HCT116 (cell line): ENCODE measurements at regions of chr14 and their contacts with region 1.

Region 1: GRCh38 chr14:101665515-101666078 is 95.9 kb upstream of the PPP2R5C start:
- DNase-seq: peak; percentile 57
- ATAC-seq: peak; percentile 98
- H3K4me3 ChIP-seq: no peak overlapping the region
- H3K27ac ChIP-seq: no peak overlapping the region
- H3K4me1 ChIP-seq: no peaks in the 10 kb centered on the region
- H3K27me3 ChIP-seq: no peaks in the 10 kb centered on the region
- CTCF ChIP-seq: peak; percentile 67 to 76 (median 69); a peak in 5 of 6 replicates
- POLR2A ChIP-seq: no peak
- RAD21 ChIP-seq: peak; percentile 90

Region 2: GRCh38 chr14:100654814-100655740 is 1010.5 kb before region 1 on chr14:
- CTCF ChIA-PET with region 1: interaction called, 3 read pairs
- POLR2A ChIA-PET with region 1: no interaction called
- RAD21 ChIA-PET with region 1: no interaction called
- intact Hi-C with region 1: loop called (anchors 10 kb)
- DNase-seq: no peak
- ATAC-seq: peak; percentile 89
- H3K4me3 ChIP-seq: peak overlapping the region; percentile 28 to 44; a peak in 2 of 4 replicates
- H3K27ac ChIP-seq: no peak overlapping the region
- H3K4me1 ChIP-seq: peaks cover 4 to 39% of the 10 kb centered on the region in 2 experiments; a peak in 3 of 4 replicates
- H3K27me3 ChIP-seq: no peaks in the 10 kb centered on the region
- CTCF ChIP-seq: peak in 2 of 3 experiments; percentile 69 to 93; a peak in 4 of 6 replicates
- POLR2A ChIP-seq: no peak
- RAD21 ChIP-seq: no peak

Region 3: GRCh38 chr14:101628471-101628966 is 37.1 kb before region 1 on chr14:
- CTCF ChIA-PET with region 1: no interaction called
- POLR2A ChIA-PET with region 1: no interaction called
- RAD21 ChIA-PET with region 1: no interaction called
- intact Hi-C with region 1: loop called (anchors 1 kb)
- DNase-seq: peak; percentile 31
- ATAC-seq: peak; percentile 95
- H3K4me3 ChIP-seq: no peak overlapping the region
- H3K27ac ChIP-seq: peak overlapping the region; percentile 24; the same call in 1 of the 2 replicates
- H3K4me1 ChIP-seq: peaks cover 7 to 9% of the 10 kb centered on the region in 2 experiments; a peak in 3 of 4 replicates
- H3K27me3 ChIP-seq: no peaks in the 10 kb centered on the region
- CTCF ChIP-seq: peak; percentile 73 to 79 (median 79)
- POLR2A ChIP-seq: no peak
- RAD21 ChIP-seq: peak; percentile 97